ENCODE measurements at regions of chr20 and their contacts with region 1.

Region 1: GRCh38 chr20:49610701-49611538 is 43.0 kb upstream of the PTGIS start:
- DNase-seq: peak; percentile 54
- H3K4me3 ChIP-seq: no peak overlapping the region
- H3K27ac ChIP-seq: no peak overlapping the region
- H3K4me1 ChIP-seq: no peaks in the 10 kb centered on the region
- H3K27me3 ChIP-seq: no peaks in the 10 kb centered on the region
- CTCF ChIP-seq: peak; percentile 99
- POLR2A ChIP-seq: no peak

Region 2: DNA sequence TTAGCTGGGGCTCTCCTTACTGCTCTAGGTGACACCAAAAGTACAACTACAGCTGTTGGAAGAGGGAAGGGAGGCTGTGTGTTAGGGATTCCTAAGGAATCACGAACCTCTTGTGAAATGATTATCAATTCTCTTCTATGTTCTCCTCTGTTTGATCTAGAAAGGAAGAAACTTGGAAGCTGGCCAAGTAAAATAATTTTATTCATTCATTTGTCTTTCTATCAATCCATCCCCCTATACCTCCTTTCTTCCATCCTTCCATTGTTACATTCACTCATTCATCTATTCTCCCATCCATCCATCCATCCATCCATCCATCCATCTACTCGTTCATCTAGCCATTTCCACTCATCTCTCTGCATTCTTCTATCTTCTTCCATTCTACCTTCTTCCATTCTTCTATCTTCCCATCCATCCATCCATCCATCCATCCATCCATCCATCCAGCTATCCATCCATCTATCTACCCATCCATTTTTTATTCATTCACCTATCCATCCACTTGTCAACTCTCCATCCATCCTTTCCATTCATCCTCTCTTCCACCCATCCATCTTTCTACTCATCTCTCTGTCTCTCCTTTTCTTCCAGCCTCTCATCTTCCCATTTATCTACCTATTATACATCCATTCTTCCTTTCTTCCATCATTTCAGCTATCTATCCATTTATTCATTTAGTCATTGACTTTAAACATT is 280.2 kb before region 1 on chr20:
- CTCF ChIA-PET with region 1: interaction called, 8 read pairs
- POLR2A ChIA-PET with region 1: no interaction called
- dilution Hi-C with region 1: no loop called
- intact Hi-C with region 1: loop called (anchors 5 kb)
- DNase-seq: no peak
- H3K4me3 ChIP-seq: no peak overlapping the region
- H3K27ac ChIP-seq: no peak overlapping the region
- H3K4me1 ChIP-seq: peaks cover 3% of the 10 kb centered on the region
- H3K27me3 ChIP-seq: peaks cover 10 to 25% of the 10 kb centered on the region in 2 experiments
- CTCF ChIP-seq: no peak
- POLR2A ChIP-seq: no peak

Region 3: DNA sequence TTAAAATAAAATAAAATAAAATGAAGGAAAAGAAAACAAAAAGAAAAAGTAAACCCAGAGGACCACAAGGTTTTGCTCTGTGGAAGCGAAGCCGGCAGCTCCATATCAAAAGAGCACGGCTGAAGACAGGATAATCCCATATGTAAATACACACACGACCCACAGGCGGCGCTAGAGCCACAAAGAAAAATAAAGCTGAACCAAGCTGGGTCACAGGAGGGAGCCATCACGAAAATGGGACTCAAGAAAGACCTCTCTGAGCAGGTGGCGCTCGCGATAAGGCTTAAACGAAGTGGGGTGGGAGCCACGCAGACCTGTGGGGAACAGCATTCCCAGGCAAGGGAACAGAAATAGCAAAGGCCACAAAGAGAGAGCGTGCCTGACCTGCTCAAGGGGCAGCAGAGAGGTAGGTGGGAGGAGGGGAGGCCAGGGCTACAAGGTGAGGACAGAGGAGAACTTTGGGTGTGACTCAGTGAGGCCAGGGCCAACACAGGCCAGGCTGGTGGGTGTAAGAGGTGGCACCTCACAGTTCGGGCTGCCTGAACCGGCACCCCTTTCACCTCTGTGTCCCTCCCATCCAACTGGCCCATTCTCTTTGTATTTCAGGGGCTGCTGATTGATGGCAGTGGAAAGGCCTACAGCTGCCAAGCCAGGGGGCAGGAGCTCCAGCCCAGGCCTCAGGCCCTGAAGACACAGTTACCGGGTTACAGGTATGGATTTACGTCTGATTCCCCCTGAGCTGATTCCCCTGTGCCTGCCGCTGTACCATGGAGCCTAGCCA is 69.0 kb before region 1 on chr20:
- CTCF ChIA-PET with region 1: interaction called, 962 read pairs
- POLR2A ChIA-PET with region 1: no interaction called
- dilution Hi-C with region 1: no loop called
- intact Hi-C with region 1: loop called (anchors 1 kb)
- DNase-seq: peak; percentile 82
- H3K4me3 ChIP-seq: no peak overlapping the region
- H3K27ac ChIP-seq: no peak overlapping the region
- H3K4me1 ChIP-seq: no peaks in the 10 kb centered on the region
- H3K27me3 ChIP-seq: no peaks in the 10 kb centered on the region
- CTCF ChIP-seq: peak; percentile 73 to 82
- POLR2A ChIP-seq: no peak

Region 4: DNA sequence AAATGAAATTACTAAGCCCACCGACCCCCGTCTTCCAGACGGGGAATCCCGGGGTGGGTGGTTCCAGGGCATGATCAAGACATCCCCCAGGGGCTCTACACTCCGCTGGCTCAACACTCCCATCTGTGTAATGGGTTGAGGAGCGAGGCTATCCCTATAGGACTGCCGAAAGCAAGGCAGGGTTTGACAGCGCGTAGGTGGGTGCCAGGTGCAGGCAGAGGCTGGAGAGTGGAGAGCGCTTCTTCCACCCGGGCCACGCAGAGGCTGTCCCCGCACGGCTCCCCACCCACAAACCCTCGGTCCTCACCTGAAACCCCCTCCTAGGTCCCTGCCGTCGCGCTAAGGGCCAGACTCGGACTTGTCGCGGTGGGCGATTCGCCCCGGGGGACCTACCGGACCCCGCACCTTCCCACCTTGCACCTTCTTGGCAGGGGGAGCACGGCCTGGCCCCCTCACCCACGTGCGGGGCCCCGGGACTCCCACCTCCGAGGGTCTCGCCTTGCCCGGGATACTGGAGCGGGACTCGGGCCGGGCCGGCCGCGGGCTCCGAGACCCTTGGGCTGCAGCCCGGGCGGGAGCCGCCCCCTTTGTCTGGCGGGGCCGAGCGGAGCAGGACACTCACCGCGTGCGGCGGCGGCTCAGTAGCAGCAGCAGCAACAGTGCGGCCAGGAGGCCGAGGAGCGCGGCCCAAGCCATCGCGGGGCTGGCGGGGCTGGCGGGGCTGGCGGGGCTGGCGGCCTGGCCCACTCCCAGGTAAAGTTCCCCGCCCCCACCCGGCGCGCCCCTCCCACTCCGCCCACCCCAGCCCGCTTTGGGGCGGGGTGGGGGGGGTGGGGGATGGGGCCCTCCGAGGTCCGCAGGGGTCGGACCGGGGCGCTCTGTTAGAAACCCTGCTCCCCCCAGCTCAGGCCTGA is 43.2 kb before region 1 on chr20 and contains the start of gene PTGIS:
- CTCF ChIA-PET with region 1: interaction called, 11 read pairs
- POLR2A ChIA-PET with region 1: no interaction called
- dilution Hi-C with region 1: no loop called
- intact Hi-C with region 1: no loop called
- DNase-seq: no peak
- H3K4me3 ChIP-seq: peak within 1 kb of the TSS; percentile 29 to 40 (median 36)
- H3K27ac ChIP-seq: no peak within 1 kb of the TSS
- H3K4me1 ChIP-seq: peaks cover 26% of the 10 kb centered on the region
- H3K27me3 ChIP-seq: no peaks in the 10 kb centered on the region
- CTCF ChIP-seq: no peak
- POLR2A ChIP-seq: no peak
- total RNA-seq, gene PTGIS: 4.4 and 6.2 TPM in 2 replicates

Region 5: DNA sequence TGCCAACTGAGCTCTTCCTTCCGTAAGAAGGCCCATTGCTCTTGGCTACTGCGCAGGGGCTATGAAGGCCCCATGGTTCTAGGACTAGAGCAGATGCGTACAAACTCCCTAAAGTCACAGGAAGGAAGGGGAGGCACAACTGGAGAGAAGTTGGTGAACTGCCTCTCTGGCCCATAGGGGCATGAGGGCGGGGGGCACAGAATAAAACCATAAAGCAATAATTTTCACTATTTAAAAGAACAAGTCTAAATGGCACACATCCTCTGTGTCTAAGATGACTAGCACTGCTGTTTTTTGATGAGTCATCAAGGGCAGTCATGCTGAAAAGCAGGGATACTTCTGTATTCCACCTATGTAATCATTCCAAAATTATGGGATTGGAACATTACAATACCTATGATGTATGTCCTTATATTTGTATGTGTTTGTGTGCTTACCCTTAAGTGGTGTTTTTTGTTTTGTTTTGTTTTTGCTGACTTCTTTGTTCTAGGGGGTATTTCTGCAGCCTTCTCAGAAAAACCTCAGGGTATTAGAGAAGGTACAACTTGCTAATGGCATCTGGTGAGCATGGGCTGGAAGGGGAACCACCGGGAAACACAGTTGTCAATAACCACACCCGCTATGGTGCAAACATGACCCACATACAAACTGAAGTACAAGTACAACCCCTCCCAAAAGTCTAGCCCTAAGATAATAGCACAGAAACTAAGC is 65.8 kb after region 1 on chr20:
- CTCF ChIA-PET with region 1: no interaction called
- POLR2A ChIA-PET with region 1: no interaction called
- dilution Hi-C with region 1: no loop called
- intact Hi-C with region 1: no loop called
- DNase-seq: peak; percentile 45
- H3K4me3 ChIP-seq: no peak overlapping the region
- H3K27ac ChIP-seq: no peak overlapping the region
- H3K4me1 ChIP-seq: peaks cover 17% of the 10 kb centered on the region
- H3K27me3 ChIP-seq: no peaks in the 10 kb centered on the region
- CTCF ChIP-seq: no peak
- POLR2A ChIP-seq: no peak

Region 6: GRCh38 chr20:49713753-49714712 is 103.1 kb after region 1 on chr20 and contains the start of gene B4GALT5:
- CTCF ChIA-PET with region 1: no interaction called
- POLR2A ChIA-PET with region 1: no interaction called
- dilution Hi-C with region 1: no loop called
- intact Hi-C with region 1: loop called (anchors 2 kb)
- DNase-seq: peak; percentile 78
- H3K4me3 ChIP-seq: peak within 1 kb of the TSS; percentile 81 to 93 (median 87)
- H3K27ac ChIP-seq: peak within 1 kb of the TSS; percentile 79
- H3K4me1 ChIP-seq: peaks cover 23% of the 10 kb centered on the region
- H3K27me3 ChIP-seq: no peaks in the 10 kb centered on the region
- CTCF ChIP-seq: no peak
- POLR2A ChIP-seq: peak; percentile 46
- total RNA-seq, gene B4GALT5: 58.5 and 70.1 TPM in 2 replicates

Region 7: DNA sequence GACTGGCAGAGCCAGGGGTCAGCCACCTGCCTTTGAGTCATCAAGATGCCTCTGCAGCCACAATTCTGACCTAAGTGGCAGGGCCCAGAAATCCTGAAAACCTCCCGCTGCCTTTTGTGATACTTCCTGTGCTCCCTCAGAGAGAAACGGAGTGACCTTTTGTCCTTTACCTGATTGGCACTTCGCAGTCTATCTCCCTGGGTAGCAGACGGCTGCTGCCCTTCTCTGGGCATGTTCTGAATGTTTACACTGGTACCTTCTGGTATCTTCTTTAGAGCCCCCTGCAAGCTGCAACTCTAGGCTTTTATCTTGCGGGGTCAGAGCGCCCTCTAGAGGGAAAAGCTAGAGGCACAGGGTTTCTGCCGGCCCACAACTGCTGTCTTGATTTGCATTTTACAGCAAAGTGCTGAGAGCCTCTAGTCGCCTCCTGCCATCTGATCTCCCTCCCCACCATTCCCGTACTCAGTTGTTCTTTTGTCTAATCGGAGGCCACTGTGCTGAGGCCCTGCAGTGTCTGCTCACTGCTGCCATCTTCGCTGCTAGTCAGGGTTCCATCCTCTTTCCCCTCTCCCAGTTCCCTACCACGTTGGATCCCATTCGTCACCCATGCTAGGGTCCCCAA is 277.5 kb after region 1 on chr20:
- CTCF ChIA-PET with region 1: interaction called, 69 read pairs
- POLR2A ChIA-PET with region 1: no interaction called
- dilution Hi-C with region 1: no loop called
- intact Hi-C with region 1: loop called (anchors 1 kb)
- DNase-seq: peak; percentile 73
- H3K4me3 ChIP-seq: no peak overlapping the region
- H3K27ac ChIP-seq: no peak overlapping the region
- H3K4me1 ChIP-seq: peaks cover 20% of the 10 kb centered on the region
- H3K27me3 ChIP-seq: no peaks in the 10 kb centered on the region
- CTCF ChIP-seq: peak; percentile 80 to 88
- POLR2A ChIP-seq: no peak

Region 8: DNA sequence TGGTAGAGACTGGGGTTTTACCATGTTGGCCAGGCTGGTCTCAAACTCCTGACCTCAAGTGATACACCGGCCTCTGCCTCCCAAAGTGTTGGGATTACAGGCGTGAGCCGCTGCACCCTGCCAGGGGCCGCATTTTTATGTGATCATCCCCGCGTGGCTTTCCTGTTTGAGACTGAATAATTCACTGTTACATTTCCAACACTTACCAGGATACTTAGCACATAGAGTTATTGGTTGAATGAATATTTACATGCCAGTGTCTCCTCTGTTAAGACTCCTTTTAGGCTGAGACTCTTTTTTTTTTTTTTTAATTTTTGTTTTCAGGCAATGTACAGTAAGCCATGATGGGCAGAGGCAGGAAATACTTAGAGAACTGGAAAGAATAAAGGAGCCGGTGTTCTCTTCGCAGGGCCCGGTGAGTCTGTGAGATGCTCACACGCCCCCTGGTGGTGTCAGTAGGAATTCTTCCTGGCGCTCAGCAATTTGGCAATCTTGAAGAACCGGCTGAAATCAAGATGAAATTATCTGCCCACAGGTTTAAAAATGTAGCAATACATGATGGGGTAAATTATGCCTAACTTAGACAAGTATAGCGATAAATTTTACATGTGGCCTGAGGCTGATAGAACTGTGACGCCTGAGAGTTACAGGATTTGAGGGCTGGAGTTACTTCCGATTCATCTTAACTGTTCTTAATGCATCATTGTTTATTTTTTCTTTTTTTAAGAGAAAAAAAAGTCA is 317.7 kb after region 1 on chr20:
- CTCF ChIA-PET with region 1: interaction called, 4 read pairs
- POLR2A ChIA-PET with region 1: no interaction called
- dilution Hi-C with region 1: no loop called
- intact Hi-C with region 1: loop called (anchors 1 kb)
- DNase-seq: peak; percentile 87
- H3K4me3 ChIP-seq: no peak overlapping the region
- H3K27ac ChIP-seq: no peak overlapping the region
- H3K4me1 ChIP-seq: peaks cover 3% of the 10 kb centered on the region
- H3K27me3 ChIP-seq: no peaks in the 10 kb centered on the region
- CTCF ChIP-seq: peak; percentile 84 to 93
- POLR2A ChIP-seq: no peak